ENCODE measurements at regions of chr16 and their contacts with region 1.

Region 1: DNA sequence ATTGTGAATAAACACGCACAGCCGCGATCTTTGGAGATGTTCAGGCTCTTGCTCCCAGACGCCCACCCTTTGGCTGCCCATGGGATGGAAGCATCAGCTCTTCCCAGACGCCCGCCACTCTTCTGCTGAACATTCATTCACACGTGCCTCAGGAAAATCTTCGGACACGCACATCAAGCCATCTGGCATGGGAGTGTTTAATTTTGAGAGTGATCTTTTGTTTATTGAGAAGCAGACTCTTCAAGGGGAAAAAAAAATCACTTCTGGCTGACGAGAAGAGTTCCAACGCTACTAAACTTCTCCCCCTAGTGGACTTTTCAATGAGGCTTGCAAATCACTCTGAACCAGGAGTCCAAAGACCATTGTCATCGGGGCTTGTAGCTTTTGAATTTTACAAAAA is 62.0 kb upstream of the NUDT7 start:
- DNase-seq: peak; percentile 35
- ATAC-seq: peak; percentile 84
- H3K4me3 ChIP-seq: no peak overlapping the region
- H3K27ac ChIP-seq: no peak overlapping the region
- H3K4me1 ChIP-seq: no peaks in the 10 kb centered on the region
- H3K27me3 ChIP-seq: peaks cover 0 to 6% of the 10 kb centered on the region in 2 experiments; a peak in 1 of 5 replicates
- CTCF ChIP-seq: peak; percentile 63
- EP300 ChIP-seq: no peak
- POLR2A ChIP-seq: no peak
- RAD21 ChIP-seq: no peak

Region 2: GRCh38 chr16:77599793-77600415 is 60.4 kb before region 1 on chr16:
- CTCF ChIA-PET with region 1: interaction called, 8 read pairs
- POLR2A ChIA-PET with region 1: no interaction called
- in situ Hi-C with region 1: no loop called
- intact Hi-C with region 1: loop called (anchors 2 kb)
- DNase-seq: peak; percentile 41
- ATAC-seq: peak; percentile 91
- H3K4me3 ChIP-seq: no peak overlapping the region
- H3K27ac ChIP-seq: no peak overlapping the region
- H3K4me1 ChIP-seq: no peaks in the 10 kb centered on the region
- H3K27me3 ChIP-seq: no peaks in the 10 kb centered on the region
- CTCF ChIP-seq: peak; percentile 80
- EP300 ChIP-seq: no peak
- POLR2A ChIP-seq: no peak
- RAD21 ChIP-seq: no peak

Region 3: GRCh38 chr16:77974893-77975292 is 314.6 kb after region 1 on chr16:
- CTCF ChIA-PET with region 1: no interaction called
- POLR2A ChIA-PET with region 1: no interaction called
- in situ Hi-C with region 1: no loop called
- intact Hi-C with region 1: no loop called
- DNase-seq: no peak
- ATAC-seq: peak; percentile 27; the same call in 1 of the 3 replicates
- H3K4me3 ChIP-seq: no peak overlapping the region
- H3K27ac ChIP-seq: no peak overlapping the region
- H3K4me1 ChIP-seq: no peaks in the 10 kb centered on the region
- H3K27me3 ChIP-seq: peaks cover 0 to 14% of the 10 kb centered on the region in 2 experiments; a peak in 2 of 5 replicates
- CTCF ChIP-seq: no peak
- EP300 ChIP-seq: no peak
- POLR2A ChIP-seq: no peak
- RAD21 ChIP-seq: no peak